PC-9 (cell line): ENCODE measurements at regions of chr11 and their contacts with region 1.

Region 1: GRCh38 chr11:14454861-14455632 is 44.6 kb downstream of the COPB1 start:
- DNase-seq: peak in 1 of 2 experiments; percentile 49
- H3K4me3 ChIP-seq: no peak overlapping the region
- H3K27ac ChIP-seq: peak overlapping the region; percentile 33; the same call in 1 of the 2 replicates
- H3K4me1 ChIP-seq: peaks cover 13% of the 10 kb centered on the region
- H3K27me3 ChIP-seq: no peaks in the 10 kb centered on the region
- CTCF ChIP-seq: peak; percentile 71

Region 2: DNA sequence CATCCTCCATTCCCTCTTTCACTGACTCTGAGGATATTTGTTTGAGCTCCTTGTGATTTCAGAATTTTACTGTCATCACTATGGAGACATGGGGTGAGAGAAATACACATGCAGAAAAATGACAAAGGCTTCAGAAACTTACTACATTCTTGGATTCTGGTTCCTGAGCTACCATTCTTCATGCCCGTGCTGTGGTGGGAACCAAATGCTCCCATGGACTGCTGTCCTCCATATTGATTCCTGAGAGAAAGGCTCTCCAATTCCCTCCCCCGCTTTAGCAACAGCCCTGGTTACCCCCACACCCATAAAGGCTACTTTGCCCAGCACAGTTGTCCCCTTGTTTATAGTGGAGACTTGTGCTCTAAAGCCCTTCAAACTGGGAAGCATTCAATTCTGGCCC is 291.5 kb before region 1 on chr11:
- CTCF ChIA-PET with region 1: interaction called, 11 read pairs
- POLR2A ChIA-PET with region 1: no interaction called
- intact Hi-C with region 1: no loop called
- DNase-seq: no peak
- H3K4me3 ChIP-seq: no peak overlapping the region
- H3K27ac ChIP-seq: no peak overlapping the region
- H3K4me1 ChIP-seq: no peaks in the 10 kb centered on the region
- H3K27me3 ChIP-seq: no peaks in the 10 kb centered on the region
- CTCF ChIP-seq: no peak

Region 3: DNA sequence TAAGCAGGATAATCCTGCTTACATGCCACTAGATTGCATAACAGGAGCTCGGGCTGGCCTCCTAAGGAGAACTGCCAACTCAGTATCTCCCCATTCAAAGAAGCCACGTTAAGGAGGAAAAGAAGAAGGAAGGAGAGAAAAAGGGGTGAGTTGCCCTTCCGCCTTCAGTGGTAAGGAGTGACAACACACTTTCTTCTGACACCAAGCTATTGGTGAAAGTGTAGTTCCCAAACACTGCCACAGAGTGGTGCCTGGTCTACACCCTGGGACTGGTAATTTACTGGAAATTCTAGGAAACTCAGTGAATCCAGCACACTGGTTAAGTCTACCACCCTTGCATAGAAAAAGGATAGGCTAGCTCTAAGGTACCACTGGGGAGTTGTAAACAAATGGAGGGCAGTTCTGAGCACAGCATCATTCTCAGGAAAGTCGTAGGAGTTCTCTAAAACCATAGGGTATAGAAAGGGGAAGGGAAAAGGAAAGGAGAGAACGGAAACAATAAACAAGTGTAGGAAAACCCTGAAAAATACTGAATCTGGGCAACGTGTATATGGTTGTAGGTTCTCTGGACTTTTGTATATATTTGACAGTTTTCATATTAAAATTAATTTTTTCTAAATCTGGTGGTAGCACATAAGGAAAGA is 154.3 kb before region 1 on chr11:
- CTCF ChIA-PET with region 1: interaction called, 14 read pairs
- POLR2A ChIA-PET with region 1: interaction called, 4 read pairs
- intact Hi-C with region 1: loop called (anchors 1 kb)
- DNase-seq: peak; percentile 44
- H3K4me3 ChIP-seq: no peak overlapping the region
- H3K27ac ChIP-seq: no peak overlapping the region
- H3K4me1 ChIP-seq: no peaks in the 10 kb centered on the region
- H3K27me3 ChIP-seq: no peaks in the 10 kb centered on the region
- CTCF ChIP-seq: peak; percentile 78

Region 4: DNA sequence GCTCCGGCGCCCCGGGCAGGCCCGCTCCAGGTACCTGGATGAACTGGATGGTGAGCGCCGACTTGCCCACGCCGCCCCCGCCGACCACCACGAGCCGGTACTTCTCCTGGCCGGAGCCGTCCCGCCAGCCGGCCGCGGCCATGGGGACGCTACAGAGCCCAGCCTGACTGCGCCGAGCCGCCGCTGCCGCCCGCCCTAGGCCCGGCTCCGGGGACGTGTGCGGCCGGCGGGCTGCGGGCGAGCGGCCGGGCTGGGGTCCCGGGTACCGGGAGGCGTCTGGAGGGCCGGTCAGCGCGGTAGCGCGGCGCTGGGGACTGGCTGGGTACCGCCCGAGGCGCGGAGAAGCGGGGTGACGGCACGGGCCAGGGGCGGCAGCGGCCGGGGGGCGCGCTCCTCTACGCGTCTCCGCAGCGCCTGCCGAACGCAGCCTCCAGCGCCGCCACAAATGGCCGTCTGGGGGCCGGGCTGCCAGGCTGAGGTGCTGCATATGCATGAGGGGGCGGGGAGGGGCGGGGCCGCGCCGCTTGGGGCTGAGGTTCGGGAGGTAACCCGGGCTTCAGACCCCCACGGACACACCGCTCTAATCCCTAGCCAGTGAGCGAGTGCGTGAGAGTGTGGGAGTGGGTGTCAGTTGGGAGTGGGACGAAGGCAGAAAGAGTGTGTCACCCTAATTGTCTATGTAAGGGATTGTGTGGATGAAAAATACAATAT is 96.2 kb before region 1 on chr11 and contains the start of gene RRAS2:
- CTCF ChIA-PET with region 1: interaction called, 11 read pairs
- POLR2A ChIA-PET with region 1: interaction called, 4 read pairs
- intact Hi-C with region 1: loop called (anchors 5 kb)
- DNase-seq: peak; percentile 46 to 63
- H3K4me3 ChIP-seq: peak within 1 kb of the TSS; percentile 67
- H3K27ac ChIP-seq: peak within 1 kb of the TSS; percentile 58
- H3K4me1 ChIP-seq: peaks cover 23% of the 10 kb centered on the region
- H3K27me3 ChIP-seq: no peaks in the 10 kb centered on the region
- CTCF ChIP-seq: no peak
- total RNA-seq, gene RRAS2: 30.7 and 42.2 TPM in 2 replicates

Region 5: DNA sequence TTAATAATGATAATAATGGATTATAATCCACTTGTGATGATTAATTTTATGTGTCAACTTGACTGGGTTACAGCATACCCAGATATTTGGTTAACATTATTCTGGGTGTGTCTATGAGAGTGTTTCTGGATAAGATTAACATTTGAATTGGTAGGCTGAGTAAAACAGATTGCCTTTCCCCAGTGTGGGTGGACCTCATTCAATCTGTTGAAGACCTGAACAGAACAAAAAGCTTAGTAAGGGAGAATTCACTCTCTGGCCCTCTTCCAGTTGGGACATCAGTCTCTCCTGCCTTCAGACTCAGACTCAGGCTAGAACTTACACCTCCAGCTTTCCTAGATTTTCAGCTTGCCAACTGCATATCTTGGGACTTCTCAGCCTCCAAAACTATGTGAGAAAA is 58.8 kb before region 1 on chr11:
- CTCF ChIA-PET with region 1: interaction called, 10 read pairs
- POLR2A ChIA-PET with region 1: no interaction called
- intact Hi-C with region 1: no loop called
- DNase-seq: no peak
- H3K4me3 ChIP-seq: no peak overlapping the region
- H3K27ac ChIP-seq: no peak overlapping the region
- H3K4me1 ChIP-seq: no peaks in the 10 kb centered on the region
- H3K27me3 ChIP-seq: no peaks in the 10 kb centered on the region
- CTCF ChIP-seq: no peak

Region 6: DNA sequence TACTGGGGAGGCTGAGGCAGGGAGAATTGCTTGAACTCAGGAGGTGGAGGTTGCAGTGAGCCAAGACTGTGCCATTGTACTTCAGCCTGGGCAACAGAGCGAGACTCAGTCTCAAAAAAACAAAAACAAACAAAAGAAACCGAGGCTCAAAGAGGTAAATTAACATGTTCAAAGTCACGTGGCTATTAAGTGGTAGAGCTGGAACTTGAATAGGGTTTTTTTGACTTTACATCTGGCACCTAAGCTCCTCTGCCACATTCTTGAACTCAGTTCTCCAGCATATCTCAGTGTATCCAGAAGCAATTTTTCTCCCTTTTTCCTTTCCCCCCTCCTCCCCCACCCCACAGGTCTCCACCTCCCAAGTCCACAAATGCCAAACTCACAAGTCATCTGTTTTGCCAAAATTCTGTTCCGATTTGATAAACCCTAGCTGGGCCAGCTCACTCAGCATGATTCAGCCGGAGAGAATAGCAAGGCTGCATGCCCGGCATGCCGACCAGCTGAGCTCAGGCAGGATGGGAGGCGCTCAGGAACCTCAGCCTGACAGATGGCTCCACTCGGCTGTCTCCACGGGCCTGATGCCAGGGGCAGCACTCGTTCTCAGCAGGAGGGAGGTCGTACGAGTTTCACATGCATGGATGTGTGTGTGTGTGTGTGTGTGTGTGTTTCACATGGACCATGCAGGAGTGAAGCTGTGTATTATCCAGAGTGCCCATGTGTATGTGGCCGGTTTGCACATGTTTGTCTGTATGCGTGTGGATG is 32.8 kb before region 1 on chr11:
- CTCF ChIA-PET with region 1: interaction called, 12 read pairs
- POLR2A ChIA-PET with region 1: interaction called, 33 read pairs
- intact Hi-C with region 1: no loop called
- DNase-seq: peak; percentile 83 to 95
- H3K4me3 ChIP-seq: no peak overlapping the region
- H3K27ac ChIP-seq: peak overlapping the region; percentile 85
- H3K4me1 ChIP-seq: peaks cover 41% of the 10 kb centered on the region
- H3K27me3 ChIP-seq: no peaks in the 10 kb centered on the region
- CTCF ChIP-seq: no peak